ENCODE measurements at regions of chr6 and their contacts with region 1.

Region 1: GRCh38 chr6:1390133-1390804 is 893 bp downstream of the FOXF2 start:
- DNase-seq: peak; percentile 14
- H3K4me3 ChIP-seq: peak overlapping the region; percentile 37 to 40
- H3K27ac ChIP-seq: peak overlapping the region; percentile 66 to 72
- H3K4me1 ChIP-seq: no peaks in the 10 kb centered on the region
- H3K27me3 ChIP-seq: peaks cover 32% of the 10 kb centered on the region
- CTCF ChIP-seq: no peak
- POLR2A ChIP-seq: no peak

Region 2: DNA sequence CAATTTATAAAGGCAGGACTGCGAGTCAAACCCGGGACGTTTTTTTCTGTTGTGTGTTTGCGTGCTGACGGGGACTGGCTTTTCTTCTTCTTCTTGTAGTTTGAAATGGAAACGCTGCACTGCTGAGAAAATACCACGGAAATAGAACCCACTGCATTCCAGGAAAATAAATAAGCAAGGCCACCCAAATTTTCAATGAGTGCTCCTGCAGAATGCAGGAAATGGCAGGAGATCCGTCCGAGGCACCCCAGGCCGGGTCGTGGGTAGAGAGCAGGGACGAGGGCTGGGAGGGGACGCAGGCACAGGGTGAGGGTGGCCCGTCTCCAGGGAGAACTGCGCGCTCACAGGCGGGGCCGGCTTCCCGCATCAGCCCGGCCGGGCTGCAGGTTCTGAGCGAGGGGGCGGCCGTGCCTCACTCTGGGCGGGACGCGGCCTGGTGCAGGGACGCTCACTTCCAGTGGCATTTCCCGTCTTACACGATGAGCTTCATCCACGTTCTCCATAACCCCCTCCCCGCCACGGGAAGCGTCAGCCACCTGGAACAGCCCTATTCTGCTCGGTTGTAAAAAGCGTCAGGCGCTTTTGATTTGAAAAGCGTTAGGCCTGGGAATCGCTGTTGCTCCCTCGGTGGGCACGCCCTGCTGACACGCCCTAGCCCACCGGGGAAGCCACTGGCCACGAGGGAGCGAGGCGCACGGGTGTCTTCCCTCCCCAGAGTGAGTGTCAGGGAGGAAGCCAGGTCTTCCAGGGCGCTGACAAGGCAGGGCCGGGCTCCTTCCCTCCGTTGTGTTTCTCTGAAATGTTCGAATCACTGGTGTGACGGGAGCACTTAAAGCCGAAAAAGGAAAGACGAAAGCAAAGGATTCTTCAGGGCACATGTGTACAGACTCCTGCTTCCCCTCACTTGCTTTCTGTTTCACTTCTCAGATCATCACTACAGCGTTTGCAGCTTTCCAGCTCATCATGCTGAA is 679.4 kb before region 1 on chr6:
- intact Hi-C with region 1: loop called (anchors 5 kb)
- DNase-seq: peak; percentile 23
- H3K4me3 ChIP-seq: peak overlapping the region; percentile 45 to 50
- H3K27ac ChIP-seq: peak overlapping the region; percentile 80 to 87
- H3K4me1 ChIP-seq: no peaks in the 10 kb centered on the region
- H3K27me3 ChIP-seq: no peaks in the 10 kb centered on the region
- CTCF ChIP-seq: no peak
- POLR2A ChIP-seq: no peak

Region 3: GRCh38 chr6:1286972-1287610 is 103.2 kb before region 1 on chr6:
- intact Hi-C with region 1: no loop called
- DNase-seq: no peak
- H3K4me3 ChIP-seq: no peak overlapping the region
- H3K27ac ChIP-seq: no peak overlapping the region
- H3K4me1 ChIP-seq: peaks cover 7% of the 10 kb centered on the region
- H3K27me3 ChIP-seq: no peaks in the 10 kb centered on the region
- CTCF ChIP-seq: peak in 1 of 4 experiments; percentile 8
- POLR2A ChIP-seq: no peak

Region 4: GRCh38 chr6:1701668-1702353 is 311.5 kb after region 1 on chr6:
- intact Hi-C with region 1: no loop called
- DNase-seq: no peak
- H3K4me3 ChIP-seq: no peak overlapping the region
- H3K27ac ChIP-seq: no peak overlapping the region
- H3K4me1 ChIP-seq: no peaks in the 10 kb centered on the region
- H3K27me3 ChIP-seq: no peaks in the 10 kb centered on the region
- CTCF ChIP-seq: no peak
- POLR2A ChIP-seq: no peak